ENCODE measurements at regions of chr5 and their contacts with region 1.

Region 1: GRCh38 chr5:157855404-157855994 is 3.4 kb downstream of the CLINT1 start:
- DNase-seq: peak; percentile 70
- H3K4me3 ChIP-seq: no peak overlapping the region
- H3K27ac ChIP-seq: no peak overlapping the region
- H3K4me1 ChIP-seq: peaks cover 0 to 8% of the 10 kb centered on the region in 2 experiments; a peak in 2 of 4 replicates
- H3K27me3 ChIP-seq: no peaks in the 10 kb centered on the region
- CTCF ChIP-seq: peak; percentile 71
- EP300 ChIP-seq: no peak
- RAD21 ChIP-seq: peak; percentile 71

Region 2: GRCh38 chr5:157548513-157549297 is 306.8 kb before region 1 on chr5:
- CTCF ChIA-PET with region 1: no interaction called
- POLR2A ChIA-PET with region 1: no interaction called
- DNase-seq: no peak
- H3K4me3 ChIP-seq: no peak overlapping the region
- H3K27ac ChIP-seq: peak overlapping the region in 1 of 2 experiments; percentile 74; a peak in 2 of 4 replicates
- H3K4me1 ChIP-seq: peaks cover 0 to 30% of the 10 kb centered on the region in 2 experiments; a peak in 3 of 4 replicates
- H3K27me3 ChIP-seq: no peaks in the 10 kb centered on the region
- CTCF ChIP-seq: no peak
- EP300 ChIP-seq: no peak
- RAD21 ChIP-seq: no peak

Region 3: GRCh38 chr5:157886796-157887380 is 31.4 kb after region 1 on chr5:
- CTCF ChIA-PET with region 1: no interaction called
- POLR2A ChIA-PET with region 1: no interaction called
- DNase-seq: no peak
- H3K4me3 ChIP-seq: no peak overlapping the region
- H3K27ac ChIP-seq: no peak overlapping the region
- H3K4me1 ChIP-seq: no peaks in the 10 kb centered on the region
- H3K27me3 ChIP-seq: no peaks in the 10 kb centered on the region
- CTCF ChIP-seq: no peak
- EP300 ChIP-seq: no peak
- RAD21 ChIP-seq: no peak

Region 4: GRCh38 chr5:157915638-157916037 is 60.1 kb after region 1 on chr5:
- CTCF ChIA-PET with region 1: interaction called, 32 read pairs
- POLR2A ChIA-PET with region 1: interaction called, 4 read pairs
- DNase-seq: peak; percentile 72
- H3K4me3 ChIP-seq: no peak overlapping the region
- H3K27ac ChIP-seq: peak overlapping the region in 1 of 2 experiments; percentile 7; a peak in 1 of 4 replicates
- H3K4me1 ChIP-seq: peaks cover 0 to 25% of the 10 kb centered on the region in 2 experiments; a peak in 2 of 4 replicates
- H3K27me3 ChIP-seq: no peaks in the 10 kb centered on the region
- CTCF ChIP-seq: no peak
- EP300 ChIP-seq: peak in 1 of 2 experiments; percentile 62; a peak in 2 of 4 replicates
- RAD21 ChIP-seq: peak; percentile 63

Region 5: DNA sequence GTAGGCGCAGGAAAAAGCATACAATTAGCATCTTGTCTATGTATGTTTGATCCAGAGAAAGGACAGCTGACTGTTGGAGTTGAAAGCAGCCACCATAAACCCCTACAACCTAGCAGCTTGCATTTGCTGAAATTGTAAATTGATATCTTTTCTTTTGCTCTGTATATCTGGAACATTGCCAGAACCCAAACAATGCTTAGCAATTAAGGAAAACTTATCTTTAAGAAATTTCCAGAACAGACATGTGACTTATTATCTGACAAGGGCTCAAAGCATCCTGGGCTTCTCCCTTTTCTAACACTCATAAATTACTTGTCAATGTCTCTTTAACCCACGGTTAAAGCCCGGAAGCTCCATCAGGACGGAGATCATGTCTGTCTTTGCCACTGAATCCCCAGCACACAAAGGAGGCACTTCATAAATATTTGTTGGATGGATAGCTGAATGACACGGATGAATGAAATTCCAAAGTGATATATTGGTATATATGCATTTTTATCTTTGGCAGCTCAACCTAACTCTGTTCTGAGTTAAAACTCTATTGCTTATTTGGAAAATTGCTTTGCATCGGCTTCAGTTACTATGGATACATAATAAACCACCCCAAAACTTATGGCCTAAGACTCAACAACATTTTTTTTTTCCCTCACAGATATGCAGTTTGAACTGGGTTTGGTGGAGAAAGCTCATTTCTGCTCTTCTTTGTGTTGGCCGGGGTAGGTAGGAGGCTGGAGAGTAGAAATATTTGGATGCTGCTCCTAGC is 106.5 kb after region 1 on chr5:
- CTCF ChIA-PET with region 1: interaction called, 11 read pairs
- POLR2A ChIA-PET with region 1: no interaction called
- DNase-seq: peak; percentile 52
- H3K4me3 ChIP-seq: no peak overlapping the region
- H3K27ac ChIP-seq: peak overlapping the region in 1 of 2 experiments; percentile 88; a peak in 2 of 4 replicates
- H3K4me1 ChIP-seq: peaks cover 0 to 13% of the 10 kb centered on the region in 2 experiments; a peak in 2 of 4 replicates
- H3K27me3 ChIP-seq: no peaks in the 10 kb centered on the region
- CTCF ChIP-seq: no peak
- EP300 ChIP-seq: no peak
- RAD21 ChIP-seq: no peak

Region 6: GRCh38 chr5:157994906-157995519 is 139.5 kb after region 1 on chr5:
- CTCF ChIA-PET with region 1: interaction called, 21 read pairs
- POLR2A ChIA-PET with region 1: no interaction called
- DNase-seq: peak; percentile 78
- H3K4me3 ChIP-seq: no peak overlapping the region
- H3K27ac ChIP-seq: no peak overlapping the region
- H3K4me1 ChIP-seq: no peaks in the 10 kb centered on the region
- H3K27me3 ChIP-seq: no peaks in the 10 kb centered on the region
- CTCF ChIP-seq: peak; percentile 71
- EP300 ChIP-seq: no peak
- RAD21 ChIP-seq: peak; percentile 84

Measured in SK-N-SH (cell line).